Right cardiac atrium (tissue), 5 donors: ENCODE measurements at regions of chr15 and their contacts with region 1.

Region 1: GRCh38 chr15:48112242-48112641 is 8.5 kb upstream of the SLC24A5 start:
- DNase-seq: peak in 1 of 3 donors; percentile 41
- ATAC-seq: peak; percentile 47 to 60
- H3K4me3 ChIP-seq: no peak overlapping the region
- H3K27ac ChIP-seq: no peak overlapping the region
- H3K4me1 ChIP-seq: peaks cover 2% of the 10 kb centered on the region
- H3K27me3 ChIP-seq: no peaks in the 10 kb centered on the region

Region 2: DNA sequence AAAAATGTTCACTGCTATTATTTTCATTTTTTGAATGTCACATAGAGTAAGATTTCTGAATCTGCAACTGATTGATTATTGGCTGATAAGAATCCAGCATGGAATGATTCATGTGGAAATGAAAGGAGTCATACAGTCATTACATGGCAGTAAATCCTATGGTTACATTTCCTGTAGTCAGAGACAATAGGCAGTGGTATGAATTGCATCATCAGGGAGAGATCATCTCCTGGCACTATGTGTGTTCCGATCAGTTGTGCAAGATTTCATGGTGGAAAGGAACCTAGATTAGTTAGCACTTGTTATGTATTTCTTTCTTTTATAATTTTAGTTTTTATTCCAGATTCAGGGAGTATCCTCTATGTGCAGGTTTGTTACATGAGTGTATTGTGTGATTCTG is 132.7 kb after region 1 on chr15:
- intact Hi-C with region 1: loop called in 1 of 4 experiments (anchors 10 kb)
- DNase-seq: no peak
- ATAC-seq: no peak
- H3K4me3 ChIP-seq: no peak overlapping the region
- H3K27ac ChIP-seq: no peak overlapping the region
- H3K4me1 ChIP-seq: no peaks in the 10 kb centered on the region
- H3K27me3 ChIP-seq: no peaks in the 10 kb centered on the region

Region 3: GRCh38 chr15:48472753-48473152 is 360.5 kb after region 1 on chr15:
- intact Hi-C with region 1: no loop called
- DNase-seq: no peak
- ATAC-seq: peak in 1 of 2 donors; percentile 42
- H3K4me3 ChIP-seq: no peak overlapping the region
- H3K27ac ChIP-seq: no peak overlapping the region
- H3K4me1 ChIP-seq: peaks cover 2% of the 10 kb centered on the region
- H3K27me3 ChIP-seq: no peaks in the 10 kb centered on the region